Gastrocnemius medialis (tissue), 4 donors: ENCODE measurements at regions of chr3 and their contacts with region 1.

Region 1: GRCh38 chr3:157566596-157566995 is 63.4 kb upstream of the VEPH1 start:
- DNase-seq: no peak
- ATAC-seq: no peak
- H3K4me3 ChIP-seq: no peak overlapping the region
- H3K27ac ChIP-seq: no peak overlapping the region
- H3K4me1 ChIP-seq: no peaks in the 10 kb centered on the region
- H3K27me3 ChIP-seq: no peaks in the 10 kb centered on the region
- CTCF ChIP-seq: no peak
- POLR2A ChIP-seq: no peak

Region 2: GRCh38 chr3:157226173-157226847 is 340.3 kb before region 1 on chr3:
- in situ Hi-C with region 1: no loop called
- intact Hi-C with region 1: loop called (anchors 10 kb)
- DNase-seq: no peak
- ATAC-seq: no peak
- H3K4me3 ChIP-seq: no peak overlapping the region
- H3K27ac ChIP-seq: no peak overlapping the region
- H3K4me1 ChIP-seq: no peaks in the 10 kb centered on the region
- H3K27me3 ChIP-seq: no peaks in the 10 kb centered on the region
- CTCF ChIP-seq: no peak
- POLR2A ChIP-seq: no peak

Region 3: GRCh38 chr3:157493627-157494550 is 72.7 kb before region 1 on chr3:
- in situ Hi-C with region 1: no loop called
- intact Hi-C with region 1: no loop called
- DNase-seq: no peak
- ATAC-seq: no peak
- H3K4me3 ChIP-seq: no peak overlapping the region
- H3K27ac ChIP-seq: no peak overlapping the region
- H3K4me1 ChIP-seq: peaks cover 0 to 3% of the 10 kb centered on the region in 2 donors
- H3K27me3 ChIP-seq: no peaks in the 10 kb centered on the region
- CTCF ChIP-seq: peak in 4 of 5 experiments; percentile 38 to 56 (median 45)
- POLR2A ChIP-seq: no peak